MCF 10A (cell line): ENCODE measurements at regions of chr1 and their contacts with region 1.

Region 1: DNA sequence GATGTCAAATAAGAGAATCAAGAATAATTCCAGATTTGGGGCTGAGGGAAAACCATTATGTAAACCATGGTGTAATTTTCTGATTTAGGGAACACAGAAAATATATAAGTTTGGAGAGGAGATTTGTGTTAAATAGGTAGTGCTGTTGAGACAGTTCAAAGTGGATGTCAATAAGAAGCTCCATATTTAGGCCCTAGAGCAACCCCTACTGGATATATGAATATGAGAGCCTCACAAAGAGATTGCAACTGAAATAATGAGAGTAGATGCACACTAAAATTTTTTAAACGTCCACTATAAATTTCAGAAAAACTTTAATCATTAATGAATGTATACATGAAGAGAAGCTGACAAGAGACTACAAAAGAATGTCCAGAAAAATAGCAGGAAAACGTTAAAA is 1447.8 kb upstream of the PRMT6 start:
- DNase-seq: peak; percentile 23
- H3K4me3 Mint-ChIP-seq: no peak overlapping the region
- H3K27ac Mint-ChIP-seq: no peak overlapping the region
- H3K4me1 Mint-ChIP-seq: no peaks in the 10 kb centered on the region
- H3K27me3 Mint-ChIP-seq: no peaks in the 10 kb centered on the region
- CTCF ChIP-seq: peak; percentile 23

Region 2: DNA sequence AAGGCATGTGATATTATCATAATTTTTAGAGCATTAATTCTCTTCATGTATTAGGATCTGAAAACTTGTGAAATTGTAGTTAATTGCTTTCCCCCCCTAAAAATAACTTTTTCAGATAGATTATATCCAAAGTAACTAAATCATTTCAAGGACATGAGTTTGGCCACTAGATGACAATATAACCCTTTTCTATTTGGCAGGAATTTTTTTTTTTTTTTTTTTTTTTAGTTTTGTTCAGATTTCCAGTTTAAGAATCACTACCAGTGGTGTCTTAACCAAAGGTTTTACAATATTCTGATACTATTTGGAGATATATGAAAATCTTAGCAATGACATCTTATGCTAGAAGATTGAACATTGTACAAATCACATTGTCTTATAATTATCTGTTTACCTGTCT is 1488.2 kb before region 1 on chr1:
- CTCF ChIA-PET with region 1: no interaction called
- POLR2A ChIA-PET with region 1: no interaction called
- intact Hi-C with region 1: loop called (anchors 10 kb)
- DNase-seq: no peak
- H3K4me3 Mint-ChIP-seq: no peak overlapping the region
- H3K27ac Mint-ChIP-seq: no peak overlapping the region
- H3K4me1 Mint-ChIP-seq: no peaks in the 10 kb centered on the region
- H3K27me3 Mint-ChIP-seq: peaks cover 26% of the 10 kb centered on the region
- CTCF ChIP-seq: peak; percentile 13

Region 3: DNA sequence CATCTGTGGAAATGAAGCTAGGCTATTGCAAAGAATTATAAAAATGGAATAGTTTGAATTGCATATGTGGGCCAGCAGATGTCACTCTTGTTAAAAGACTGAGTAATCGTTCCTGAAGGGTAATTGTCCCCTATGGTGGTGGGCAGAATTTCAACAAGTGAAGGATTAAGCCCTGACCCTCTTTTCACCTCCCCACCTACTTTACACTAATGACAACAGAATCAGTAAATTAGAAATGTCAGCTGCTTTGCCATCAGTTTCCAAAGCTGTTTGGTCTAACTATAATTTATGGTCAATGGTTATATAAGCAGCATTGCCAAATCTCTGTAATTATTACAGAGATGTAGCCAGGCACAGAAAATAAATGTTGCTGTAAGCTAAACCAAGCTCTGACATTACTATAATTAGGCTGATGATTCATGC is 960.4 kb before region 1 on chr1:
- CTCF ChIA-PET with region 1: interaction called, 3 read pairs
- POLR2A ChIA-PET with region 1: no interaction called
- intact Hi-C with region 1: loop called (anchors 2 kb)
- DNase-seq: peak; percentile 41
- H3K4me3 Mint-ChIP-seq: no peak overlapping the region
- H3K27ac Mint-ChIP-seq: no peak overlapping the region
- H3K4me1 Mint-ChIP-seq: no peaks in the 10 kb centered on the region
- H3K27me3 Mint-ChIP-seq: no peaks in the 10 kb centered on the region
- CTCF ChIP-seq: peak; percentile 45

Region 4: DNA sequence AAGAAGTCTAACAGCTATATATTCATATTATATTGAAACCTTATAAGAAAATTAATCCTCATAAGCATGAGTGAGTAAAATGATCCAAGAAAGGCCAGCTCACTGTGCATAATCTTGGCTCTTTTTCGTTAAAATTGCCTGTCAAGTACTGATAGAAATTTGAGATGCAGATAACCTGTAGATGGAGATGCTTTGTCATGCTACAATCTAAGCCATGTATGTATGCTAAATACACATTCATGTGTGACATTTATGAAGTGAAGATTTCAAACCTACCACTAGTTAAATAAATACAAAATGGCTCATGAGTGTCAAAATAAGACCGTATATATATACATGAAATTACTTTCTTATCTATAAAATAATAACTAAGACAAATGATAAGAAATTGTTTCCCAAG is 43.7 kb before region 1 on chr1:
- CTCF ChIA-PET with region 1: no interaction called
- POLR2A ChIA-PET with region 1: no interaction called
- intact Hi-C with region 1: no loop called
- DNase-seq: no peak
- H3K4me3 Mint-ChIP-seq: no peak overlapping the region
- H3K27ac Mint-ChIP-seq: no peak overlapping the region
- H3K4me1 Mint-ChIP-seq: no peaks in the 10 kb centered on the region
- H3K27me3 Mint-ChIP-seq: no peaks in the 10 kb centered on the region
- CTCF ChIP-seq: no peak

Region 5: GRCh38 chr1:105686874-105687690 is 78.4 kb after region 1 on chr1:
- CTCF ChIA-PET with region 1: no interaction called
- POLR2A ChIA-PET with region 1: no interaction called
- intact Hi-C with region 1: no loop called
- DNase-seq: no peak
- H3K4me3 Mint-ChIP-seq: no peak overlapping the region
- H3K27ac Mint-ChIP-seq: no peak overlapping the region
- H3K4me1 Mint-ChIP-seq: no peaks in the 10 kb centered on the region
- H3K27me3 Mint-ChIP-seq: no peaks in the 10 kb centered on the region
- CTCF ChIP-seq: no peak